ENCODE measurements at regions of chr5 and their contacts with region 1.

Region 1: GRCh38 chr5:76601470-76601869 is 21.7 kb downstream of the F2RL2 start:
- DNase-seq: peak; percentile 46
- H3K4me3 ChIP-seq: no peak overlapping the region
- H3K27ac ChIP-seq: no peak overlapping the region
- H3K4me1 ChIP-seq: no peaks in the 10 kb centered on the region
- H3K27me3 ChIP-seq: no peaks in the 10 kb centered on the region
- CTCF ChIP-seq: peak; percentile 58 to 74

Region 2: DNA sequence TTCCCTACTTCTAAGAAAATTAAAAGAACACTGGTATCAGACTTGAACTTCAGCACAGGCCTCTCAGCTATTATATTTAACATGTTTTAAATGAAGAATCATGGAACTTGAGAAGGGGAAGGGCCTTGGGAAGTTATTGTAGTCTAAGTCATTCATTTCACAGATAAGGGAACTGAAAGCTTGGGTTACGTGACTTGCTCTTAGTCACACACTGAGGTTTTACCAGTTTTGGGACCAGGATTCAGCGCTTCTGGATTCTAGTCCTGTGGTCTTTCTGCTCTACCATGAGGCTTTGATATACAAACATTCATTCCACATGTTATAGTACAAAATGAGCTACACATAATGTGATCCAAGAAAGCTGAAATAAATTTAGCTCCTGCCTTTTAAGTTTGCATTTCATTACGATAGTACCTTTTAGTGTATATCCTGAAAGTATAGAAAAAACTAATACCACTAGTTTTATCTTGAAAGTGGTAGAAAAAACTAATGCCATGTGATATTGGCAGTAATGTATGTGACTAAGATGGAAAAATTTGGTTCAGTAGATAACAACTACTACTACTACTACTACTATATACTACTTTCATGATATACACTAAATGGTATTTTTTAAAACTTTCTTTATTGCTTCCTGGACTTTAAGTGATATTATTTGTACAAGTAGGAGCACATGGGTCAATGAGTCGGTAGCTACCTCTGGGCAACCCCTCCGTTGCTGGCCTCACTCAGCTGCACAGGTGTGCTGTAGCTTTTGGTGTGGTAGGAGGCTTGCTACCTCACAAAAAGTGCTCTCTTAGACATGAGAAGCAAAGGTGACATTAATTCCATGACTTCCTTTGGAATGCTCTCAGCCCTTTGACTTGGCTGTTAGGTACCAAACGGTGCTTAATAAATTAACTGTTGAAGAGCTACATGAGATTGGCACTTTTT is 19.0 kb before region 1 on chr5:
- CTCF ChIA-PET with region 1: no interaction called
- dilution Hi-C with region 1: no loop called
- in situ Hi-C with region 1: no loop called
- intact Hi-C with region 1: no loop called
- DNase-seq: peak; percentile 6
- H3K4me3 ChIP-seq: no peak overlapping the region
- H3K27ac ChIP-seq: no peak overlapping the region
- H3K4me1 ChIP-seq: no peaks in the 10 kb centered on the region
- H3K27me3 ChIP-seq: no peaks in the 10 kb centered on the region
- CTCF ChIP-seq: no peak

Region 3: DNA sequence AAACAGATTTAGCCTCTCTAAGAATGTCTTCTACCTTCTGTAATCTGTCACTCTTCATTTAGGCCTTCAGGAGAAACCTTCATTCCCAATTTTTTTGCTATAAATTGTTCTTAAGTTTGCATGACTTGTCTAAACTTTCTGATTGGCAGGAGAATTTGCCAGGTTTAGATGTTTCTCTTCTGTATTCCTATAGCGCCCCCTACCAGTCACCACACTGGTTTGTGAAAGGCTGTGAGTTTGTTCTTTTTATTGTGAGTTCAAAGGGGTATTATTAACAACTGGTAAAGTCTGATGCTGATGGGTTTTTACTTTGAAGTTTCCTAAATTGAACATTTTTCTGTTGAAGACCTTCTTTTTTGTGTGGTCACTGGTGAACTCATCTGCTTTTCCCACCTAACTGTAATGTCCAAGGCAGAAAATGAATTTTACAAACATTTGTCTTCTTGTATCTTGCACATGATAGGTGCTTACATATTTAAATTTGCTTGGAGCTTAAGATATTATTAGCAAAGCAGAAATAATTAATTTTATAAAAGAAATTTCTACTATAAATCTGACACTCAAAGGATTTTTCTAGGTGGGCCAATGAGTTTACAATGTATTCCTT is 40.1 kb after region 1 on chr5:
- CTCF ChIA-PET with region 1: interaction called, 5 read pairs
- dilution Hi-C with region 1: no loop called
- in situ Hi-C with region 1: no loop called
- intact Hi-C with region 1: loop called (anchors 1 kb)
- DNase-seq: peak; percentile 41
- H3K4me3 ChIP-seq: no peak overlapping the region
- H3K27ac ChIP-seq: no peak overlapping the region
- H3K4me1 ChIP-seq: peaks cover 7% of the 10 kb centered on the region
- H3K27me3 ChIP-seq: no peaks in the 10 kb centered on the region
- CTCF ChIP-seq: peak; percentile 83 to 86

Region 4: GRCh38 chr5:76691467-76692138 is 90.1 kb after region 1 on chr5:
- CTCF ChIA-PET with region 1: no interaction called
- dilution Hi-C with region 1: no loop called
- in situ Hi-C with region 1: no loop called
- intact Hi-C with region 1: no loop called
- DNase-seq: no peak
- H3K4me3 ChIP-seq: no peak overlapping the region
- H3K27ac ChIP-seq: no peak overlapping the region
- H3K4me1 ChIP-seq: peaks cover 43% of the 10 kb centered on the region
- H3K27me3 ChIP-seq: no peaks in the 10 kb centered on the region
- CTCF ChIP-seq: no peak

Region 5: GRCh38 chr5:76715736-76716455 is 114.4 kb after region 1 on chr5 and contains the start of gene F2R:
- CTCF ChIA-PET with region 1: no interaction called
- dilution Hi-C with region 1: no loop called
- in situ Hi-C with region 1: no loop called
- intact Hi-C with region 1: loop called (anchors 1 kb)
- DNase-seq: peak; percentile 44
- H3K4me3 ChIP-seq: peak within 1 kb of the TSS; percentile 83 to 95 (median 92)
- H3K27ac ChIP-seq: peak within 1 kb of the TSS; percentile 61
- H3K4me1 ChIP-seq: peaks cover 20% of the 10 kb centered on the region
- H3K27me3 ChIP-seq: no peaks in the 10 kb centered on the region
- CTCF ChIP-seq: peak; percentile 16 to 50
- total RNA-seq, gene F2R: 30.7 to 81.4 TPM

Region 6: GRCh38 chr5:76771705-76772405 is 170.4 kb after region 1 on chr5:
- CTCF ChIA-PET with region 1: interaction called, 32 read pairs
- dilution Hi-C with region 1: no loop called
- in situ Hi-C with region 1: loop called (anchors 5 kb)
- intact Hi-C with region 1: loop called (anchors 1 kb)
- DNase-seq: no peak
- H3K4me3 ChIP-seq: no peak overlapping the region
- H3K27ac ChIP-seq: no peak overlapping the region
- H3K4me1 ChIP-seq: no peaks in the 10 kb centered on the region
- H3K27me3 ChIP-seq: no peaks in the 10 kb centered on the region
- CTCF ChIP-seq: no peak

Region 7: GRCh38 chr5:76818844-76819831 is 217.7 kb after region 1 on chr5 and contains the start of gene F2RL1:
- CTCF ChIA-PET with region 1: no interaction called
- dilution Hi-C with region 1: no loop called
- in situ Hi-C with region 1: no loop called
- intact Hi-C with region 1: loop called (anchors 2 kb)
- DNase-seq: peak; percentile 98
- H3K4me3 ChIP-seq: peak within 1 kb of the TSS; percentile 81 to 97 (median 94)
- H3K27ac ChIP-seq: peak within 1 kb of the TSS; percentile 97
- H3K4me1 ChIP-seq: peaks cover 39% of the 10 kb centered on the region
- H3K27me3 ChIP-seq: no peaks in the 10 kb centered on the region
- CTCF ChIP-seq: no peak
- total RNA-seq, gene F2RL1: 57.2 to 93.5 TPM

Region 8: GRCh38 chr5:76920491-76920890 is 319.0 kb after region 1 on chr5:
- CTCF ChIA-PET with region 1: interaction called, 10 read pairs
- dilution Hi-C with region 1: no loop called
- in situ Hi-C with region 1: no loop called
- intact Hi-C with region 1: no loop called
- DNase-seq: no peak
- H3K4me3 ChIP-seq: no peak overlapping the region
- H3K27ac ChIP-seq: no peak overlapping the region
- H3K4me1 ChIP-seq: no peaks in the 10 kb centered on the region
- H3K27me3 ChIP-seq: no peaks in the 10 kb centered on the region
- CTCF ChIP-seq: no peak

Region 9: DNA sequence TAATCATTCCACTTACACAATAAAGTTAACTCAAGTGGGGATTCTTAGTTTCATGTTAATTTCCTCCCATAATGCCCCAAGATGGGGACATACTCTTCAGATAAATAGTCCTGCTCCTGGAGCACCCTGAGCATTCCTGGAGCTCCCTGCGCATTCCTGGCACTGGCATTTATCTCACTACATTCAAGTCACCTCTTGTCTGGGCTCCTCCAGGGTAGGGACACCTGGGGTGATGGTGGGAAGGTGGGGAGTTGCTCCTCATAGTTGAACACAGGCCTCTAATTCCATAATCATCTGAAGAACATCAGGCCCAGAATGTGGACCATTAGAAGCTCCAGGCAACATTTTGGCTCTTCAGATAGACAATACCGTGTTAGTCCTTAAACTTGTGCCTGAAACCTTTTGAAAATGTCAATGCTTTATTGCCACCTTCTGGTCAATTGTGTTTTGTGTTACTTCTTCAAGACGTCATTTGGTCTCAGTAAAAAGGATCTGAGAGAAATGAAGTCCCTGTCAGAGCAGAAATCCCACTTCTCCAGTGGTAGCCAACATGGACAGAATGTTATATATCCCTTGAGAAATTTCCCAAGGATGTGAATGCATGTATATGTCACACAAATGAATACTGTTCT is 414.6 kb after region 1 on chr5:
- CTCF ChIA-PET with region 1: no interaction called
- dilution Hi-C with region 1: no loop called
- in situ Hi-C with region 1: loop called (anchors 25 kb)
- intact Hi-C with region 1: loop called (anchors 1 kb)
- DNase-seq: peak; percentile 37
- H3K4me3 ChIP-seq: no peak overlapping the region
- H3K27ac ChIP-seq: no peak overlapping the region
- H3K4me1 ChIP-seq: no peaks in the 10 kb centered on the region
- H3K27me3 ChIP-seq: no peaks in the 10 kb centered on the region
- CTCF ChIP-seq: peak in 1 of 2 donors; percentile 44

Measured in mammary epithelial cell (primary cell).